ENCODE measurements at regions of chr6 and their contacts with region 1.

Region 1: DNA sequence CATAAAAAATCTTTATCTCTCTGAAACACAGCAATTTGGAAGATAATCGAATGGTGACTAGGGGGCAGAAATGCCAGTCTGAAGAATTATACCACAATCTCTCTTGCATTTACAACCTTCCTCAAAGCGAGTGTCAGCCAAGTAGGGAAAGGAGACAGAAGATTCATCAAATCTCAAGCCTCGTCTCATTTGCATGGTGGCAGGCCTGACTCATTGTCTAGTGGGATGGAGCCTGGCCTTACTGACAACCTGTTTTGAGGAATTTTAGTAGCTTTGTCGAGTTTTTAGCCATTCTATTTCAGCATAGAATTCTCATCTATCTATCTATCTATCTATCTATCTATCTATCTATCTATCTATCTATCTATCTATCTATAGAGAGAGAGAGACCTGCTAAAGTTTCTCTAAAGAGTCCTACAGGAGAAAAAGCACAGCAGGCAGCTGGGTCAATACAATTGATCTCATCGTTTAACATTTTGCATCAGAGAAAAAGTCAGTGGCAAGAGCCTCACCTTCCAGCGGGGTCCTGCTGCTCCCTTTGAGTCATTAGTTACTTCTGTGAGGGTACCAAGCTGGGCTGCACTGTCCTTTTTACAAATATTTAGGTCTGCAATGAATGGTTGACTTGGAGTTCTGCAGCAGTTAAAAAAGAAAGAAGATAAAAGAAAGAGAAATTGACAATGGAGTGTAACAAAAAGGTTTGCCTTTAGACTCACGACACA is 572.7 kb downstream of the TFAP2A start:
- DNase-seq: no peak
- H3K4me3 ChIP-seq: no peak overlapping the region
- H3K27ac ChIP-seq: no peak overlapping the region
- H3K4me1 ChIP-seq: no peaks in the 10 kb centered on the region
- H3K27me3 ChIP-seq: no peaks in the 10 kb centered on the region
- CTCF ChIP-seq: no peak

Region 2: GRCh38 chr6:9810276-9810675 is 31.9 kb before region 1 on chr6:
- CTCF ChIA-PET with region 1: no interaction called
- POLR2A ChIA-PET with region 1: no interaction called
- intact Hi-C with region 1: loop called (anchors 1 kb)
- DNase-seq: no peak
- H3K4me3 ChIP-seq: peak overlapping the region; percentile 54
- H3K27ac ChIP-seq: no peak overlapping the region
- H3K4me1 ChIP-seq: no peaks in the 10 kb centered on the region
- H3K27me3 ChIP-seq: no peaks in the 10 kb centered on the region
- CTCF ChIP-seq: no peak

Region 3: DNA sequence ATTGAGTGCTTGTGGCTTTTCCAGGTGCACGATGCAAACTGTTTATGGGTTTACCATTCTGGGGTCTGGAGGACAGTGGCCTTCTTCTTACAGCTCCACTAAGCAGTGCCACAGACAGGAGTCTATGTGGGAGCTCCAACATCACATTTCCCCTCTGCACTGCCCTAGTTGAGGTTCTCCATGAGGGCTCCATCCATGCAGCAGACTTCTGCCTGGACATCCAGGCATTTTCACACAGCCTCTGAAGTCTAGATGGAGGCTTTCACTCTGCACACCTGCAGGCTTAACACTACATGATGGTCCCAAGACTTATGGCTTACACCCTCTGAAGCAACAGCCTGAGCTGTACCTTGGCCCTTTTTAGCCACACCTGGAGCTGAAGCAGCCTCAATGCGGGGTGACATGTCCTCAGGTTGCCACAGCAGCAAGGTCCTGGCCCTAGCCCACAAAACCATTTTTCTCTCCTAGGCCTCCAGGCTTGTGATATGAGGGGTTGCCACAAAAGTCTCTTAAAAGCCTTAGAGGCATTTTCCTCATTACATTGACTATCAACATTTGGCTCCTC is 20.5 kb after region 1 on chr6:
- CTCF ChIA-PET with region 1: no interaction called
- POLR2A ChIA-PET with region 1: no interaction called
- intact Hi-C with region 1: no loop called
- DNase-seq: no peak
- H3K4me3 ChIP-seq: no peak overlapping the region
- H3K27ac ChIP-seq: no peak overlapping the region
- H3K4me1 ChIP-seq: no peaks in the 10 kb centered on the region
- H3K27me3 ChIP-seq: no peaks in the 10 kb centered on the region
- CTCF ChIP-seq: no peak

Region 4: GRCh38 chr6:10030942-10031537 is 188.9 kb after region 1 on chr6:
- CTCF ChIA-PET with region 1: no interaction called
- POLR2A ChIA-PET with region 1: interaction called, 16 read pairs
- intact Hi-C with region 1: no loop called
- DNase-seq: no peak
- H3K4me3 ChIP-seq: no peak overlapping the region
- H3K27ac ChIP-seq: no peak overlapping the region
- H3K4me1 ChIP-seq: peaks cover 28% of the 10 kb centered on the region
- H3K27me3 ChIP-seq: no peaks in the 10 kb centered on the region
- CTCF ChIP-seq: peak; percentile 58